ENCODE measurements at regions of chr1 and their contacts with region 1.

Region 1: GRCh38 chr1:230978491-230979388 is at the starts of genes ARV1 and TTC13:
- DNase-seq: peak; percentile 83 to 98 (median 93)
- ATAC-seq: peak; percentile 97
- H3K4me3 ChIP-seq: peak within 1 kb of the TSS; percentile 71
- H3K4me3 Mint-ChIP-seq: peak within 1 kb of the TSS in 9 of 10 donors; percentile 83 to 100 (median 98)
- H3K27ac ChIP-seq: peak within 1 kb of the TSS; percentile 82
- H3K27ac Mint-ChIP-seq: peak within 1 kb of the TSS; percentile 92 to 99 (median 96)
- H3K4me1 ChIP-seq: peaks cover 34 to 39% of the 10 kb centered on the region in 2 donors
- H3K4me1 Mint-ChIP-seq: peaks cover 34 to 52% (median 43%) of the 10 kb centered on the region in 7 donors
- H3K27me3 ChIP-seq: no peaks in the 10 kb centered on the region
- H3K27me3 Mint-ChIP-seq: no peaks in the 10 kb centered on the region
- total RNA-seq, gene ARV1: 5.6 to 15.2 (median 11.5) TPM
- total RNA-seq, gene TTC13: 31.8 to 54.6 (median 45.1) TPM

Region 2: GRCh38 chr1:229507951-229508822 is 1470.6 kb before region 1 on chr1 and contains the start of gene NUP133:
- CTCF ChIA-PET with region 1: no interaction called
- POLR2A ChIA-PET with region 1: no interaction called
- intact Hi-C with region 1: loop called in 1 of 2 experiments (anchors 5 kb)
- DNase-seq: peak; percentile 93 to 97 (median 97)
- ATAC-seq: peak; percentile 98
- H3K4me3 ChIP-seq: peak within 1 kb of the TSS; percentile 91
- H3K4me3 Mint-ChIP-seq: peak within 1 kb of the TSS; percentile 90 to 98 (median 92)
- H3K27ac ChIP-seq: peak within 1 kb of the TSS; percentile 95
- H3K27ac Mint-ChIP-seq: peak within 1 kb of the TSS; percentile 95 to 99 (median 99)
- H3K4me1 ChIP-seq: peaks cover 4 to 13% of the 10 kb centered on the region in 2 donors
- H3K4me1 Mint-ChIP-seq: peaks cover 10 to 47% (median 38%) of the 10 kb centered on the region in 7 donors
- H3K27me3 ChIP-seq: no peaks in the 10 kb centered on the region
- H3K27me3 Mint-ChIP-seq: peaks cover 0 to 5% (median 2%) of the 10 kb centered on the region in 5 donors
- total RNA-seq, gene NUP133: 24.3 to 45.8 (median 40.4) TPM

Region 3: DNA sequence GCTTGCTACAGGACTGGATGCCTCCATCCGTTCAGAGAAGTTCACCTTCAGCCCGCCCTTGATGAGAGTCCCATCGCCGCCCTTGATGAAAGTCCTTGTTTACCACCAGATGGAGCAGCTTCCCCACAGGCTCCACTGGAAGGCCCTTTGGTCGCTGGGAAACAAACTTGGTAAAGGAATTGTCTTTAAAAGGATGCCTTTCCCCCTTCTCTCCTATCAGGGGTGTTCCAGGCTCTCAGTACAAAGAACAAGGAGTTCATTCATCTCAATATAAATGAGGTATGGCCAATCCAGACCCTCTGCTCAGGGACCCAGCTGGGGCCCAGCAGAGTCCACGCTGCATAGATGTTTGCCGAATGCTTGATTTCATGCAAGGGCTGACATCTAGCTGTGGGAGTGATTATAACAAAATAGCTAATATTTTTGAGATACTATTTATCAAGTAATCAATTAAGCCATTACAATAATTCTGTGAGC is 180.8 kb before region 1 on chr1:
- CTCF ChIA-PET with region 1: interaction called, 3 read pairs
- POLR2A ChIA-PET with region 1: no interaction called
- intact Hi-C with region 1: loop called in 1 of 2 experiments (anchors 2 kb)
- DNase-seq: peak in 1 of 9 donors; percentile 2
- ATAC-seq: no peak
- H3K4me3 ChIP-seq: no peak overlapping the region
- H3K4me3 Mint-ChIP-seq: no peak overlapping the region
- H3K27ac ChIP-seq: no peak overlapping the region
- H3K27ac Mint-ChIP-seq: no peak overlapping the region
- H3K4me1 ChIP-seq: no peaks in the 10 kb centered on the region
- H3K4me1 Mint-ChIP-seq: no peaks in the 10 kb centered on the region
- H3K27me3 ChIP-seq: no peaks in the 10 kb centered on the region
- H3K27me3 Mint-ChIP-seq: peaks cover 4 to 42% (median 16%) of the 10 kb centered on the region in 5 donors

Region 4: DNA sequence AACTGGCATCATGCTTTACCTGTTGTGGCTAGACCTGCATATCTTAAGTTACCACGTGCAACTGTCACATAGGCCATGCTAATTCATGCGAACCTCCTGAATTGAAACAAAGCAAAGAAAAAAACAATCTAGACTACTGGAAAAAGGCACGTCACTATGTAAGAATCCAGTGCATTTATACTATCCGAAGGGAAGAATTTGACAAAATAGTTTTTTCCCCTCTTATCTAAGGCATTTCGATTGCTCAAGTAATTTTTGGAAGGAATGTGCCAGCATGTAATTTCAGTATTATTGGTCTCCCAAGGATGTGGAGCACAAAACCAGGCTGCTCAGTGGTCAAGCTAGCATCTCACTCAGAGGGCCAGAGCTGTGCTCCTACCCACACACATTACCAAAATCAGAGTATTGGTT is 78.9 kb before region 1 on chr1:
- CTCF ChIA-PET with region 1: no interaction called
- POLR2A ChIA-PET with region 1: no interaction called
- intact Hi-C with region 1: no loop called
- DNase-seq: no peak
- ATAC-seq: no peak
- H3K4me3 ChIP-seq: no peak overlapping the region
- H3K4me3 Mint-ChIP-seq: no peak overlapping the region
- H3K27ac ChIP-seq: no peak overlapping the region
- H3K27ac Mint-ChIP-seq: peak overlapping the region in 2 of 9 donors; percentile 13 to 39
- H3K4me1 ChIP-seq: no peaks in the 10 kb centered on the region
- H3K4me1 Mint-ChIP-seq: no peaks in the 10 kb centered on the region
- H3K27me3 ChIP-seq: no peaks in the 10 kb centered on the region
- H3K27me3 Mint-ChIP-seq: no peaks in the 10 kb centered on the region

Region 5: DNA sequence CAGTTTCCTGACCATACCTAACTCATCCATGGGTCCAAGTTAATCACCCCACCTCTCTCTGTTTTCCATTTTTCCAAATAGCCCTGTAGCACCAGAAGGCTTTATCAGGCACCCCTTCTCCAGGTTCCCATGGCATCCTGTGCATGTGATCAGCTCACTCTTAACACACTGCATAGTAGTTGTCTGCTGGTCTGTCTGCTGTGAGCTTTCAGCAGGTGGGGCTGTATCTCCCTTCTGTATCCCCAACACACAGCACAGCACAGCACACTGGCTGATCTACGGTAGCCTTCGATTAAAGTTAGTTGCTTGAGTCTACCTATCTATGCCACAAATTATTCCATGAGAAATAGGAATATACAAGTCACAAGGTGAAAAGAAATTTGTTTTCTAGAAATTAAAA is 56.1 kb before region 1 on chr1:
- CTCF ChIA-PET with region 1: interaction called, 4 read pairs
- POLR2A ChIA-PET with region 1: no interaction called
- intact Hi-C with region 1: loop called (anchors 1 kb)
- DNase-seq: no peak
- ATAC-seq: no peak
- H3K4me3 ChIP-seq: no peak overlapping the region
- H3K4me3 Mint-ChIP-seq: no peak overlapping the region
- H3K27ac ChIP-seq: peak overlapping the region; percentile 3
- H3K27ac Mint-ChIP-seq: peak overlapping the region in 4 of 9 donors; percentile 7 to 76 (median 66)
- H3K4me1 ChIP-seq: no peaks in the 10 kb centered on the region
- H3K4me1 Mint-ChIP-seq: peaks cover 0 to 6% (median 0%) of the 10 kb centered on the region in 7 donors
- H3K27me3 ChIP-seq: no peaks in the 10 kb centered on the region
- H3K27me3 Mint-ChIP-seq: no peaks in the 10 kb centered on the region

Region 6: GRCh38 chr1:231211005-231211857 is 232.5 kb after region 1 on chr1:
- CTCF ChIA-PET with region 1: no interaction called
- POLR2A ChIA-PET with region 1: no interaction called
- intact Hi-C with region 1: loop called (anchors 1 to 2 kb)
- DNase-seq: peak; percentile 78 to 91 (median 86)
- ATAC-seq: peak; percentile 94
- H3K4me3 ChIP-seq: peak overlapping the region; percentile 56
- H3K4me3 Mint-ChIP-seq: peak overlapping the region; percentile 29 to 95 (median 90)
- H3K27ac ChIP-seq: peak overlapping the region; percentile 14
- H3K27ac Mint-ChIP-seq: peak overlapping the region; percentile 22 to 90 (median 80)
- H3K4me1 ChIP-seq: peaks cover 4% of the 10 kb centered on the region in 2 donors
- H3K4me1 Mint-ChIP-seq: peaks cover 0 to 12% (median 9%) of the 10 kb centered on the region in 7 donors
- H3K27me3 ChIP-seq: no peaks in the 10 kb centered on the region
- H3K27me3 Mint-ChIP-seq: peaks cover 0 to 5% (median 0%) of the 10 kb centered on the region in 5 donors

Region 7: DNA sequence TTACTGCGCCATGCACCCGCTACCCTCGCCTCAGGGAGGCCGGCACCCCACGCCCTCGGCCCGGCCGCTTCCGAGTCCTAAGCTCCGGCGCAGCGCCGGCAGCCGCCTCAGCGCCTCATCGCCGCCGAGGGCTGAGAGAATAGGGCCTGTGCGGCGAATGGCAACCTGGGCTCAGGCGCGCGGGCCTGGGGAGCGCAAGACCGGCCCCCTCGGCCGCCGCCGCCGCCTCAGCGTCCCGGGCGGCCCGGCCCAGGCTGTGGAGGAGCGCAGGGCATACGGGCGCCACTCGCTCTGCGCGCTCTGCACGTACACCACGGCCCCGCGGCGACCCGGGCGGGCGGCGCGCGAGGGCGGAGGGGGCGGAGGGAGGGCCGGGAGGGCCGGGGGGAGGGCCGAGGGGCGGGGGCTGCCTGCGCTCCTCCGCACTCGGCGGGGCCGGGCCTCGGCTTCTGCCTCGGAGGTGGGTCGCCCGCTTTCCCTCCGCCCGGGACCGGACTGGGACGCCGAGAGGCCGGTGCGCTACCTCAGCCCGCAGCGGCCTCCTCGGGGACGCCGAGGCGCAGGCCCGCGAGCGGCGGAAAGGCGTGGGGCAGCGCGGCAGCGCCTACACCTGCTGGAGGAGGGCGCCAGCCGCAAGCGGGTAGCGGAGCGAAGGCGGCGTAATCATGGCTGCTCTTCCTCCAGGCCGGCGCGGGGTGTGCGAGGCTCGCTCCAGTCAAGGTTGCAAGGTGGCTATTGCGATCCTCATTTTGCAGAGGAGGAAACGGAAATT is 443.4 kb after region 1 on chr1 and contains the start of gene EGLN1:
- CTCF ChIA-PET with region 1: no interaction called
- POLR2A ChIA-PET with region 1: no interaction called
- intact Hi-C with region 1: loop called (anchors 1 to 2 kb)
- DNase-seq: peak; percentile 73 to 86 (median 83)
- ATAC-seq: peak; percentile 92
- H3K4me3 ChIP-seq: peak within 1 kb of the TSS; percentile 86
- H3K4me3 Mint-ChIP-seq: peak within 1 kb of the TSS; percentile 89 to 97 (median 92)
- H3K27ac ChIP-seq: peak within 1 kb of the TSS; percentile 80
- H3K27ac Mint-ChIP-seq: peak within 1 kb of the TSS; percentile 82 to 97 (median 91)
- H3K4me1 ChIP-seq: peaks cover 28 to 34% of the 10 kb centered on the region in 2 donors
- H3K4me1 Mint-ChIP-seq: peaks cover 36 to 56% (median 46%) of the 10 kb centered on the region in 7 donors
- H3K27me3 ChIP-seq: no peaks in the 10 kb centered on the region
- H3K27me3 Mint-ChIP-seq: peaks cover 0 to 32% (median 0%) of the 10 kb centered on the region in 5 donors
- total RNA-seq, gene EGLN1: 13.6 to 38.9 (median 23.0) TPM

Region 8: DNA sequence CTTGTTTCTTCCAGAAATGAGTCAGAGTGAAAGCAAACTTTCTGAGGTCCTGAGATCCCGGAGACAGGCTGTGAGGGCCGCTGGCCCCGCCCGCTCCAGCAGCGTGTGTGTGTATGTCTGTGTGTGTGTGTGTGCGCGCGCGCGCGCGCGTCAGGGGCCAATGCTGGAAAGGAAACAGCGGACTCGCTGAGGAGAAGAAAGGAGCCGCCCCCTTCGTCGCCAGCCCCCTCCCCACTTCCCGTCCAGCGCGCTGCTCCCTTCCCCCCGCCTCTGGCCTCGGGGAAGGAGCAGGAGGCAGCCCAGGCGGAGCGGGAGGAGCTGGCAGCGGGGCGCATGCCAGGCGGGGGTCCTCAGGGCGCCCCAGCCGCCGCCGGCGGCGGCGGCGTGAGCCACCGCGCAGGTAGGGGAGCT is 647.8 kb after region 1 on chr1 and contains the start of gene DISC1:
- CTCF ChIA-PET with region 1: no interaction called
- POLR2A ChIA-PET with region 1: no interaction called
- intact Hi-C with region 1: loop called in 1 of 2 experiments (anchors 10 kb)
- DNase-seq: peak; percentile 49 to 74 (median 70)
- ATAC-seq: peak; percentile 88
- H3K4me3 ChIP-seq: peak within 1 kb of the TSS; percentile 74
- H3K4me3 Mint-ChIP-seq: peak within 1 kb of the TSS; percentile 88 to 98 (median 94)
- H3K27ac ChIP-seq: peak within 1 kb of the TSS; percentile 60
- H3K27ac Mint-ChIP-seq: peak within 1 kb of the TSS; percentile 77 to 97 (median 92)
- H3K4me1 ChIP-seq: peaks cover 8 to 16% of the 10 kb centered on the region in 2 donors
- H3K4me1 Mint-ChIP-seq: peaks cover 17 to 52% (median 38%) of the 10 kb centered on the region in 7 donors
- H3K27me3 ChIP-seq: no peaks in the 10 kb centered on the region
- H3K27me3 Mint-ChIP-seq: peaks cover 0 to 36% (median 0%) of the 10 kb centered on the region in 5 donors
- total RNA-seq, gene DISC1: 17.1 to 33.8 (median 23.5) TPM

Measured in naive thymus-derived CD4-positive, alpha-beta T cell (primary cell).